HCT116 (cell line): ENCODE measurements at regions of chr7 and their contacts with region 1.

Region 1: GRCh38 chr7:106779877-106780276 is 85.2 kb upstream of the PIK3CG start:
- DNase-seq: peak; percentile 59
- ATAC-seq: peak; percentile 83
- H3K4me3 ChIP-seq: no peak overlapping the region
- H3K27ac ChIP-seq: peak overlapping the region; percentile 6; the same call in 1 of the 2 replicates
- H3K4me1 ChIP-seq: peaks cover 23 to 63% of the 10 kb centered on the region in 2 experiments
- H3K27me3 ChIP-seq: no peaks in the 10 kb centered on the region
- CTCF ChIP-seq: peak; percentile 58 to 66 (median 64); a peak in 5 of 6 replicates
- POLR2A ChIP-seq: no peak
- RAD21 ChIP-seq: peak; percentile 79

Region 2: GRCh38 chr7:106542550-106543220 is 237.2 kb before region 1 on chr7:
- CTCF ChIA-PET with region 1: interaction called, 22 read pairs
- POLR2A ChIA-PET with region 1: interaction called, 5 read pairs
- RAD21 ChIA-PET with region 1: interaction called, 3 to 5 read pairs
- intact Hi-C with region 1: loop called (anchors 5 kb)
- DNase-seq: peak; percentile 77
- ATAC-seq: peak; percentile 97
- H3K4me3 ChIP-seq: no peak overlapping the region
- H3K27ac ChIP-seq: no peak overlapping the region
- H3K4me1 ChIP-seq: peaks cover 0 to 14% of the 10 kb centered on the region in 2 experiments; a peak in 3 of 4 replicates
- H3K27me3 ChIP-seq: no peaks in the 10 kb centered on the region
- CTCF ChIP-seq: peak; percentile 68 to 96 (median 80)
- POLR2A ChIP-seq: no peak
- RAD21 ChIP-seq: peak; percentile 91

Region 3: DNA sequence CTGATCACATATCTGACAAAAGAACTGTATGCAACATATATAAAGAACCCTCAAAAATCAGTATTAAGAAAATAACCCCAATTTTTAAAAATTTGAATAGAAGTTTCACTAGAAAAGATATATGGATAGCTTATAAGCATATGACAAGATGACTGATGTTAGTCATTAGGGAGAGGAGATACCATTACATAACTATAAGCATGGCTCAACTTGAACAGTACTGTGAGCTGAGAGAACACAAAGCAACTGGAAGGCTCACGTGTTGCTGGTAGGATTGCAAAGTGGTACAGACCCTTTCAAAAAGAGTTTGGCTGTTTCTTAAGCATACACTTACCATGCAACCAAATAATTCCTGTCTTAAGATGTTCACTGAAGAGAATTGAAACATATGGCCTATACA is 133.6 kb before region 1 on chr7:
- CTCF ChIA-PET with region 1: no interaction called
- POLR2A ChIA-PET with region 1: no interaction called
- RAD21 ChIA-PET with region 1: no interaction called
- intact Hi-C with region 1: no loop called
- DNase-seq: no peak
- ATAC-seq: no peak
- H3K4me3 ChIP-seq: no peak overlapping the region
- H3K27ac ChIP-seq: no peak overlapping the region
- H3K4me1 ChIP-seq: no peaks in the 10 kb centered on the region
- H3K27me3 ChIP-seq: no peaks in the 10 kb centered on the region
- CTCF ChIP-seq: no peak
- POLR2A ChIP-seq: no peak
- RAD21 ChIP-seq: no peak

Region 4: GRCh38 chr7:106679153-106679931 is 100.5 kb before region 1 on chr7:
- CTCF ChIA-PET with region 1: no interaction called
- POLR2A ChIA-PET with region 1: no interaction called
- RAD21 ChIA-PET with region 1: no interaction called
- intact Hi-C with region 1: no loop called
- DNase-seq: no peak
- ATAC-seq: no peak
- H3K4me3 ChIP-seq: no peak overlapping the region
- H3K27ac ChIP-seq: no peak overlapping the region
- H3K4me1 ChIP-seq: peaks cover 4 to 27% of the 10 kb centered on the region in 2 experiments; a peak in 2 of 4 replicates
- H3K27me3 ChIP-seq: no peaks in the 10 kb centered on the region
- CTCF ChIP-seq: no peak
- POLR2A ChIP-seq: no peak
- RAD21 ChIP-seq: no peak

Region 5: GRCh38 chr7:106717955-106718871 is 61.7 kb before region 1 on chr7:
- CTCF ChIA-PET with region 1: no interaction called
- POLR2A ChIA-PET with region 1: no interaction called
- RAD21 ChIA-PET with region 1: no interaction called
- intact Hi-C with region 1: loop called (anchors 2 kb)
- DNase-seq: peak; percentile 87
- ATAC-seq: peak; percentile 93
- H3K4me3 ChIP-seq: peak overlapping the region in 1 of 2 experiments; percentile 22; a peak in 3 of 4 replicates
- H3K27ac ChIP-seq: peak overlapping the region; percentile 62; the same call in 1 of the 2 replicates
- H3K4me1 ChIP-seq: peaks cover 15 to 32% of the 10 kb centered on the region in 2 experiments
- H3K27me3 ChIP-seq: no peaks in the 10 kb centered on the region
- CTCF ChIP-seq: no peak
- POLR2A ChIP-seq: no peak
- RAD21 ChIP-seq: peak; percentile 29